ENCODE measurements at regions of chr9 and their contacts with region 1.

Region 1: GRCh38 chr9:93028448-93029006 is 30.0 kb upstream of the SUSD3 start:
- DNase-seq: peak; percentile 74
- H3K4me3 Mint-ChIP-seq: peak overlapping the region; percentile 72
- H3K27ac Mint-ChIP-seq: peak overlapping the region; percentile 90
- H3K4me1 Mint-ChIP-seq: peaks cover 68% of the 10 kb centered on the region
- H3K27me3 Mint-ChIP-seq: no peaks in the 10 kb centered on the region

Region 2: GRCh38 chr9:92850884-92851283 is 177.6 kb before region 1 on chr9:
- CTCF ChIA-PET with region 1: no interaction called
- POLR2A ChIA-PET with region 1: no interaction called
- DNase-seq: no peak
- H3K4me3 Mint-ChIP-seq: no peak overlapping the region
- H3K27ac Mint-ChIP-seq: no peak overlapping the region
- H3K4me1 Mint-ChIP-seq: no peaks in the 10 kb centered on the region
- H3K27me3 Mint-ChIP-seq: no peaks in the 10 kb centered on the region

Region 3: DNA sequence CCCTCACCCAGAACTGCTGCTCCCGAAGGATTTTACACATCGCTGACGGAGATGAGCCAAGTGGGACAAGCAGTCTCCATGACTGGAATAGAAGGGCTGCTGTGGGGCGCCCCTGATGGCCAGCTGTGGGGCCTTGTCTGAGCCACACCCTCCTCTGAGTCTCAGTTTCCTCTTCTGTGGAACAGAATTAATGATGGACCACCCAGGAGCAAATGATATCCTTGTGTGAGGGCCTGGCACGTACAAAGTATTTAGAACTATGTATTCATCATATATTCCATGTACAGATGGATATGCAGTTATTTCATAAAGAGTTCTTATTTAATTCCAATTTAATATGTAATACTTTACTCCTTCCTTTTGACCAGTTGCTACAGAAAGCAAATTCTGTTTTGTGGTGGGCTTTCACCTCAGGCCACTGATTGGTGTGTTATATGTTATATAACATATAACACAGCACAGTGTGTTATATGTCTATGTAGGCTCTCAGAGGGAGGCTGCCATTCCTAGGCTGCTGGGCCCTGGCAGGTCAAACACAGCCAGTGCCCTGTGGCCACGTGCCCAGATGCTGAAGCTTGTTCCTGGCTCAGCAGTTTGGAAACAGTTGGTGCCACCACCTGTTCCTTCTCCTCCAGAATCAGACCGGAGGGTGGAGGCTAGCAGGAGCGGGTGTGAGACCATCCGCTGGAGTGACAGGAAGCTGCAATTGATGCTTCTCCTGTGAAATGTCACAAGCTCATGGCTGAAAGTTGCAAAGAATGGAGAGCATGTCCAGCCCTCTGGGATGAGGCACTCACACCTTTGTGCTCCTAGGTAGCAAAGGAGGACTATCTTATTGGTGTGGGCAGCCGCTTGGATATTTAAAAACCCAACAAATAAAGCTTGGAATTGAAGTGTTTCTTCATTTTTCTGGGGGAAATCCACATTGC is 85.6 kb before region 1 on chr9:
- CTCF ChIA-PET with region 1: no interaction called
- POLR2A ChIA-PET with region 1: no interaction called
- DNase-seq: no peak
- H3K4me3 Mint-ChIP-seq: no peak overlapping the region
- H3K27ac Mint-ChIP-seq: no peak overlapping the region
- H3K4me1 Mint-ChIP-seq: peaks cover 12% of the 10 kb centered on the region
- H3K27me3 Mint-ChIP-seq: peaks cover 8% of the 10 kb centered on the region

Region 4: GRCh38 chr9:92954049-92954861 is 74.3 kb before region 1 on chr9:
- CTCF ChIA-PET with region 1: interaction called, 5 read pairs
- POLR2A ChIA-PET with region 1: interaction called, 11 read pairs
- DNase-seq: peak; percentile 88
- H3K4me3 Mint-ChIP-seq: peak overlapping the region; percentile 63
- H3K27ac Mint-ChIP-seq: peak overlapping the region; percentile 91
- H3K4me1 Mint-ChIP-seq: peaks cover 71% of the 10 kb centered on the region
- H3K27me3 Mint-ChIP-seq: no peaks in the 10 kb centered on the region

Region 5: GRCh38 chr9:92963831-92964626 is 64.5 kb before region 1 on chr9:
- CTCF ChIA-PET with region 1: interaction called, 3 read pairs
- POLR2A ChIA-PET with region 1: interaction called, 13 read pairs
- DNase-seq: peak; percentile 84
- H3K4me3 Mint-ChIP-seq: peak overlapping the region; percentile 85
- H3K27ac Mint-ChIP-seq: peak overlapping the region; percentile 98
- H3K4me1 Mint-ChIP-seq: peaks cover 63% of the 10 kb centered on the region
- H3K27me3 Mint-ChIP-seq: no peaks in the 10 kb centered on the region

Region 6: DNA sequence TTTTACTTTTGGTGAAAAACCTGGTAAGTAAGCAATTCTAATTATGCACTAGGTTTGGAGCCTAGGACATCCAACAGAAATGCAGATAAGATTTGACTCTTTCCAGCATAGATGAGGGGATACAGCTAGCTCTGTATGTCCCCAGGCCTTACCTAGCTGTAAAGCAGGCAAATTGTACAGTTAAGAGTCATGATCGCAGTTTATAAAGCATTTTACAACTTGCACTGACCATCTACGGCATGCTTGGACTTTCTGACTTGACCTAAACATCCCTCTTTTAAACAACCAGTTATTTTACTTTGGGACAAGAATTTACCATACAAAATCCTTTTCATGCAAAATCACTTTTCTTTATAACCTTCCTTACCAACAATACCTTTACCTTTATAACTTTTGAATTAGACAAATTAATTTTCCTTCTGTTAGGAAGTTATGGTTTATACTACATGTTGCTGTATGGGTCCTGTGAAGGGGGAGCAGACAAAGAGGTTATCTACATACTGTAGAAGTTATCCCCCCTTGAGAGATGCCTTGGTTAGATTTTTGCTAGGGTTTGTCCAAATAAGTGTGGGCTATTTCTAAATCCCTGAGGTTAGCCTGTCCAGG is 44.4 kb before region 1 on chr9:
- CTCF ChIA-PET with region 1: no interaction called
- POLR2A ChIA-PET with region 1: no interaction called
- DNase-seq: no peak
- H3K4me3 Mint-ChIP-seq: no peak overlapping the region
- H3K27ac Mint-ChIP-seq: no peak overlapping the region
- H3K4me1 Mint-ChIP-seq: peaks cover 66% of the 10 kb centered on the region
- H3K27me3 Mint-ChIP-seq: no peaks in the 10 kb centered on the region

Region 7: DNA sequence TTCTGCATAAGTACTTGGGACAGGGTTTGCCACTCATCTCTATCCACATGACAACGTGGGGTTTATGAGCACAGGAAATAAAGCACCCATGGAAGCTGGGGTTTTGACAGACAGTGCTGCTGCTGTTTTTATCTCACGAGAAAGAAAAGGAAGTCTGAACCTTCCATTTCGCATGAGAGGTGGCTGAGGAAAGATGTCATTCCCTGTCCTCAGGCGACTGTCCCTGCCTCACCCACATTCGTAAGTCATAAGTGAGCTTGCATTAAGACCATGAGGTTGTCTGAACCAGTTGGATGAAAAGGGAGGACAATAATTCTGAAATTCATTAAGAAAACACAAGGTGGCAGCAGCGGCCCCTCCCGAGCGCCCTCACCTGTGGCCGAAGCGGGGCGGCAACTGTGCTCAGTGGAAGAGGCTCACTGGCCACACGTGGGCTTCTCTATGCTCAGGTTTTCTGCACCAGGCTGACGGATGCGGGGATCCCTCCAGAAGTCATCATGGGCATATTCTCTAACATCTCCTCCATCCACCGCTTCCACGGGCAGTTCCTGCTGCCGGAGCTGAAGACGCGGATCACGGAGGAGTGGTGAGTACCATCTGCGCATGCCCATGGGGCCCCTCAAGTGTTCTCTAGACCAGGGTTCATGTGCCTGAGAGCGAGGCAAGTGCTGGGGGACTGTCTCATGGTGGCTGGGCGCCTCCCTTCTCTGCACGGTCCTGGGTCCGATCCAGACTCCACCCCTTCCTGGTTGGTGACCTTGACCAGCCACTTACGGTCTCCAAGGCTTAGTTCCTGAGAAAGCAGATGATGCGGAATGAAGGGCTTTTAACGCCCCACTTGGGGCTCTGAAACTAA is 24.7 kb before region 1 on chr9:
- CTCF ChIA-PET with region 1: interaction called, 18 read pairs
- POLR2A ChIA-PET with region 1: interaction called, 7 read pairs
- DNase-seq: peak; percentile 68
- H3K4me3 Mint-ChIP-seq: no peak overlapping the region
- H3K27ac Mint-ChIP-seq: peak overlapping the region; percentile 78
- H3K4me1 Mint-ChIP-seq: peaks cover 46% of the 10 kb centered on the region
- H3K27me3 Mint-ChIP-seq: no peaks in the 10 kb centered on the region

Region 8: DNA sequence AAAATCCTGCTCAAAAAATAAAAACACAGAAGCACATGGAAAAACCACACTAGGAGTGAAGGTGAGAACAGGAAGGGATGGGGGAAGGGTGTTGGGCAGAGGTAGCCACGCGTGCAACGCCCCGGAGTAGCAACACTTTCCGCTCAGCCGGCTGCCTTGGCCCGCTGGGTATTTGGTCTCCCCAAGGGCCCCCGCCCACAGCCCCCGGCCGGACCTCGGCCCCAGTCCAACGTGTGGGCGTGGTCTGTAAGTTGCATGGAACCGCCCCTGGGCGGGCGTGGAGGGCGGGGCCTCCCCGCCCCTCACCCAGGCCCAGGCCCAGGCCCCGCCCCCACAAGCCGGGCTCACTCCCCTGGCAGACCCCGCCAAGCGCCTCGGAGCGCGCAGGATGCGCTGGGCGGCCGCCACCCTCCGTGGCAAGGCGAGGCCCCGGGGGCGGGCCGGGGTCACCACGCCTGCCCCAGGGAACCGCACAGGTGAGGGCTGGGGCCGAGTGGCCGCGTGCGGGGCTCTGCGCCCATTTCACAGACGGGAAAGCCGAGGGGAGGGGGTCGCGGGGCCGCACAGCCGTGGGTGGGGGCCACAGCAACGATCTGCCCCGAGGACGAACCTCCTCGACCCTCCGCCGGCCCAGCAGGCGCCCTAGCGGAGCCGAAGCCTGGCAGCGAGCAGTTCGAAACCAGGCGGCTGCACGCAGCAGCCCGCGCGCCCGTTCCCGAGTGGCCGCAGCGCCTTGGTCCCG is 30.0 kb after region 1 on chr9 and contains the start of gene SUSD3:
- CTCF ChIA-PET with region 1: interaction called, 3 read pairs
- POLR2A ChIA-PET with region 1: interaction called, 35 read pairs
- DNase-seq: peak; percentile 77
- H3K4me3 Mint-ChIP-seq: peak within 1 kb of the TSS; percentile 92
- H3K27ac Mint-ChIP-seq: peak within 1 kb of the TSS; percentile 83
- H3K4me1 Mint-ChIP-seq: peaks cover 63% of the 10 kb centered on the region
- H3K27me3 Mint-ChIP-seq: no peaks in the 10 kb centered on the region
- total RNA-seq, gene SUSD3: 69.6 to 71.4 TPM

Region 9: GRCh38 chr9:93064392-93065134 is 36.0 kb after region 1 on chr9:
- CTCF ChIA-PET with region 1: interaction called, 7 read pairs
- POLR2A ChIA-PET with region 1: interaction called, 35 read pairs
- DNase-seq: peak; percentile 95
- H3K4me3 Mint-ChIP-seq: peak overlapping the region; percentile 74
- H3K27ac Mint-ChIP-seq: peak overlapping the region; percentile 94
- H3K4me1 Mint-ChIP-seq: peaks cover 77% of the 10 kb centered on the region
- H3K27me3 Mint-ChIP-seq: no peaks in the 10 kb centered on the region

Region 10: DNA sequence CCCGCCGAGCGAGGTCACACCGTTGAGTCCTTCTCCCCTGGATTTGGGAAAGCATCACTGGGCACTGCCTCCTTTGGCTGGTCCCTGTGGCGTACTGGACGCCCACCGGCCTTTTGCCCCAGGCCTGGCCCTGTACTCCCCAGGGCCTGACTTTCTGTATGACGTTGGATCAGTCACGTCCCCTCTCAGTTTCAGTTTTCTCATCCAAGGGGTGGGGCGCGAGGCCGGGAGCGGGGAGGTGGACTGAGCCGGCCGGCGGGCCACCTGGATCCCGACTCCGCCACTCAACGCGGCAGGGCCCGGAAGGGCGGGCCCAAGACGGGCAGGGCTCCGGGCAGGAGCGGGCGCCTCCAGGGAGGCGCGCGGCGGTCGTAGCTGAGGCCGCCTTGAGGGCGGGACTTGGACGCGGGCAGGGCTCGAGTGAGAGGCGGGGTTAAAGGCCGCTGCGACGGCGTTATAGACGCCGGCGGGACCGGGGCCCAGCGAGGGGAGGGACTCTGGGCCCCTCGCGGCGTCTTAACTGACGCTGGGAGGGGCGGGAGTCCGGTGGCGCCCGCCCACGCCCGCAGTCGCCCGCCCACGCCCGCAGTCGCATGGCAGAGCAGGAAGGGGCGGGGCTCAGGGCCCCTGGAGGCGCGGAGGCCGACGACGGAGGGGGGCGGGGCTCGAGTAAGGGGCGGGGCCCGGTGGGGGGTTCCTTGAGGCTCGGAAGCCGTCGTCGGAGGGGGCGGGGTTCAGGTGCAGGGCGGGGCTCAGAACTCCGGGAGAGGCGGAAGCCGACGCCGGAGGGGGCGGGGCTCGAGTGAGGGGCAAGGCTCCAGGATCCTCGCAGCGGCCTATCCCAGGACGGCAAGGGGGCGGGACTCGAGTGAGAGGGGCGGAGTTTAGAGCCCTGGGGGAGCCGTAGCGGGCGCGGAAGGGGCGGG is 66.9 kb after region 1 on chr9:
- CTCF ChIA-PET with region 1: no interaction called
- POLR2A ChIA-PET with region 1: interaction called, 12 read pairs
- DNase-seq: peak; percentile 100
- H3K4me3 Mint-ChIP-seq: peak overlapping the region; percentile 76
- H3K27ac Mint-ChIP-seq: peak overlapping the region; percentile 96
- H3K4me1 Mint-ChIP-seq: peaks cover 78% of the 10 kb centered on the region
- H3K27me3 Mint-ChIP-seq: no peaks in the 10 kb centered on the region

Region 11: DNA sequence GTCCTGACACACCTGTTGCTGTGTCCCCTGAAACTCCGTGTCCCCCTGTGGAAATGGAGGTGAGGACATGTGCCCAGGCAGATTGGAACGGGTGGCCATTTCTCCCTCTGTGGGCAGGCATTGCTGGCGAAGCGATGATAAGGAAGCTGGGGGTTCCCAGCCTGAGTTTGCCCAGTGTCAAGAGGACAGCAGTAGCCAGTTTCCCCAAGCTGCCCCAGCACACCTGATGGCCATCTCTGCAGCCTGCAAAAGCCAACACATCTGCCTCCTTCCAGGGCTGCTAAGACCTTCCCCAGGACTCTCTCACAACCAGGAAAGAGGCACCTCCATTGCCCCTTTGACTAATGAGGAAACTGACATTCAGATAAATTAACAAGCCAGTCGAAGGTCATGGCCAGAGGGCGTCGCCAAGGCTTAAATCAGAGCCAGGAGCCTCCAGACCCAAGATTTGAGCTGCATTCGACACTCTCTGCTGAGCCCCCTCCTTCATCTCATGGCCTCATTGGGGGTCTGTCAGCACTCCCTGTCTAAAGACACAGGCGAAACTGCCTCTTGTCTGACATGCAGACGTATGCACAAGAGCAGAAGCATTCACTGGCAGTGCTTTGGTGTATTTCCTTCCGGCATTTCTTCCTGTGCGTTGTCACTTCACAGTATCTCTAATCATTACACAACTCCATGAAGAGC is 145.0 kb after region 1 on chr9:
- CTCF ChIA-PET with region 1: no interaction called
- POLR2A ChIA-PET with region 1: no interaction called
- DNase-seq: no peak
- H3K4me3 Mint-ChIP-seq: no peak overlapping the region
- H3K27ac Mint-ChIP-seq: no peak overlapping the region
- H3K4me1 Mint-ChIP-seq: peaks cover 5% of the 10 kb centered on the region
- H3K27me3 Mint-ChIP-seq: peaks cover 4% of the 10 kb centered on the region